AG04450 (cell line): ENCODE measurements at regions of chr17 and their contacts with region 1.

Region 1: DNA sequence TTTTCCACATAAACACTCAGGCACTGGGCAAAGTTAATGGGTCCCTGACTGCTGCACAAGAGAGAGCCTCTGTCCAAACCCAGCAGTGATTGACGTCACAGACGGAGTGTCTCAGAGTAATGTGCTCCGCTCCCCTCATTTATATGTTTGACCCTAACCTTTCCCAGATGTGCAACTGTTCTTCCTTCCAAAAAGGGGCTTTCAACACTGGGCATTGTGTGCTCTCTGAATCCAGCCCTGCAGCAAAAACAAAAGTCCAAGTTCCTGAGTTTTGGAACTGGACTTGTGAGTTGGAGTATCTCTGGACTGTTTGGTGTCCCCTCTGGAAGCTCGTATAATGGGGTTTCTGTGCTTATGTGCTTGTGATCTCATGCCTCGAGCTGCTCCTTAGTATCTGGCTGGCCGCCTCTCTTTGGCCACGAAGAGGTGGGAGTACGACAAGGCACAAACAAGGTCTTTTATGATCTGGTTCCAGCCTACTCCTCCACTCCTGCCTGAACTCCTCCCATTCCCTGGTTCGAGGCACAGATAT is 76.4 kb upstream of the SMIM36 start:
- DNase-seq: no peak
- H3K4me3 ChIP-seq: no peak overlapping the region
- H3K27ac ChIP-seq: peak overlapping the region; percentile 4
- H3K27me3 ChIP-seq: no peaks in the 10 kb centered on the region
- CTCF ChIP-seq: no peak

Region 2: DNA sequence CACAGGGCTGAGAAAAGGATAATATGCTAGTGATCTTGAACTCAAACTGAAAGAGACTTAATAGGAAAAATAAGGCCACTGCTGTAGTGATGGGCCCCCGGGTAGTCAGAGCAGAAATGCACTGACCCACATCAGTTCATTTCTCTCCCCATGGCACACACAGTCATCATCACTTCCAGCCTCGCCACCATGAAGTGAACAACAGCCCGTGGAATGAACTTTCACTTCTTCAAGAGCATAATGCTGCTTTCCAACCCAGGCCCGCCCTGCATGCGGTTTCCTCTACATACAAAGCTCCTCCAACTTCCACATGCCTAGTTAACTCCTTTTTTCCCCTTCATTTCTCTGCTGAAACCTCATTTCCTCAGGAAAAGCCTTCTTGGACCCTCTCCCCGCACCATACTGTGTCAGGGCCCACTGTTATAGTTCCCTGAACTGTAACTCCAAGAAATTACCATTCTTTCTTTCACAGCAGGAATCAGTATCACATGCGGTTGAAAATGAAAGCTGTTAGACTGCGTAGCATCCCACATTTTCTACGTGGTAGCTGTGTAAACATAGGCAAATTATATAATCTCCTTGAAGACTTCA is 10.6 kb before region 1 on chr17:
- CTCF ChIA-PET with region 1: no interaction called
- POLR2A ChIA-PET with region 1: interaction called, 15 read pairs
- DNase-seq: no peak
- H3K4me3 ChIP-seq: peak overlapping the region; percentile 50
- H3K27ac ChIP-seq: peak overlapping the region; percentile 95
- H3K27me3 ChIP-seq: no peaks in the 10 kb centered on the region
- CTCF ChIP-seq: no peak

Region 3: GRCh38 chr17:55673743-55674506 is 86.3 kb after region 1 on chr17:
- CTCF ChIA-PET with region 1: no interaction called
- POLR2A ChIA-PET with region 1: no interaction called
- DNase-seq: no peak
- H3K4me3 ChIP-seq: no peak overlapping the region
- H3K27ac ChIP-seq: no peak overlapping the region
- H3K27me3 ChIP-seq: no peaks in the 10 kb centered on the region
- CTCF ChIP-seq: no peak